ENCODE measurements at regions of chr4 and their contacts with region 1.

Region 1: DNA sequence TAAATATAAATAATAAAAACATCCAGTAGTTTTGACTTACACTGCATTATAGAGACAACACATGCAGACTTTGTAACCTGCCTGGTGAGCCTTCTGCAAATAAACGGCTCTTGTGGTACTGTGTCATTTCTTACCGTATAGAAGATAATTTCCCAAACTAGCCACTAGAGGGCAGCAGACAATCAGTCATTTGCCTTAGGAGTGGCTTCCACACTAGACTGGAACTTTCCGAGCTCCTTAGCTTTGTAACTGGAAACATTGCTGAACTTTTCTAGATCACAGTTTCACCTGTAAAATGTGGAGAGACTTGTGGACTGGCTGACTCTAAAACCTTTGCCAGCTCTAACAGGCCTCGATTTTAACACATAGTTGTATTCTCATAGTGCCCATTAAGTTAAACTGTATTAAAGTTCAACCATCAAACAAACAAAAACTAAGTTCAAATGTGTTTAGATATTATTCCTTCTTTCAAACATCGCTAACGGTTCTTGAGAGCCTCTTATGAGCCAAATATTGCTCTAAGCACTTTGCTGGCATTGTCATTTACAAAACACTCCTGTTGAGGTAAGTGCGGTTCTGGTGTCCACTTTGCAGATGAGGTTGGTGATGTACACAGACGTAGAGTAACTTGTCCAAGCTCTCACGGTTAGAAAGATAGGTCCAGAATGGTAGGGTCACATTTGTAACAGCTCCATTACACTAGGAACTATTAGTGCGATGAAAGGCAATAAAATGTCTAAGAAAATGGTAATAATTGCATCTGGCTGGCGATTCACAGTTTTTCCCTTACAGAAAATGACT is 345.5 kb downstream of the ANK2 start:
- DNase-seq: peak; percentile 13 to 30
- ATAC-seq: peak; percentile 98

Region 2: DNA sequence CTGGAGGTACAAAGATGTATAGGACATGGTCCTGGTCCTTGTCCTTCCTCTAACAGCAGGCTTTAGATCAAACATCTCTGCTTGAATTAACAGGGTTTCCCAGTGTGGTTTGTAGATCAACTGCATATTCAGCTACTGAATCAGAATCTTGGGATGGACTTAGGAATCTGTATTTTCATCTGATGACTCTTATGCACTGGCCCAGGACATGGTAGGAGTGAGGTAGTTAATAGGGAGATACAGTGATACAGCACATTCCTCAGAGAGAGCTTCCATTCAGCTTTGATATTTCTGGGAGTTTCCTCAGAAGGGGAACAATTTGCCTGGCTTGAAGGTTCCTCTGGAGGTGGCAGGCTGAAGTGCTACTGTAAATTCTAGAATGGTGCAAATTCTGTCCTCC is 554.9 kb before region 1 on chr4:
- intact Hi-C with region 1: no loop called
- DNase-seq: no peak
- ATAC-seq: no peak

Region 3: GRCh38 chr4:113801882-113802281 is 407.0 kb after region 1 on chr4:
- intact Hi-C with region 1: no loop called
- DNase-seq: no peak
- ATAC-seq: no peak

Region 4: GRCh38 chr4:114077610-114078009 is 682.7 kb after region 1 on chr4:
- intact Hi-C with region 1: loop called in 1 of 2 experiments (anchors 10 kb)
- DNase-seq: no peak
- ATAC-seq: no peak

Region 5: DNA sequence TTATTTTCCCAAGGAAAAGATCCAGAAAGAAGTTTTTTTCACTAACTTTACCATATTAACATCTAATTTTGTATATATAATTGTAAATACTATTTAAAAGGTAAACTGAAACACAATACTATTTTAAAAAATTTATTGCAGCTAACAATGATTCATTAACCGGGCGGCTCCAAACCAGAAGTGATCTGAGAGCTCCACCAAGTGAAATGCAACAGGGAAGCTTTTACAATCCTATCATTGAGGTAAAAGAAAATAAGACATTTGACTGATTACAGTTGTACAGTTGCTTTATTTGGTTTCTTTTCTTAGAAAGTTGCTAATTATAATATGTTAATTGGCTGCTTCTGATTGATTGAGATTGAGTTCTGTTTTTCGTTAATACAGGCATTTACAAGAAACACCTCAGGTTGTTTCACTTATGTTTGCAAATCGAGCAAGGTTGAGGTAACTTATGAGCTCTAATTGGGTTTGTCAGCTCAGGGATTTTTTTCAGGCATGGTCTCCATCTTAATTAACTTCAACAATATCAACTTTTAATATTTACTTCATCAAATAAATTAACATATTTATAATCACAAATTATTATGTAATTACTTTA is 983.5 kb after region 1 on chr4:
- intact Hi-C with region 1: loop called in 1 of 2 experiments (anchors 10 kb)
- DNase-seq: no peak
- ATAC-seq: no peak